ENCODE measurements at regions of chr19 and their contacts with region 1.

Region 1: GRCh38 chr19:50724522-50725217 is 1.5 kb downstream of the CLEC11A start:
- DNase-seq: peak; percentile 99
- H3K4me3 ChIP-seq: peak overlapping the region; percentile 68 to 82 (median 74)
- H3K27ac ChIP-seq: peak overlapping the region; percentile 20; the same call in 1 of the 2 replicates
- H3K4me1 ChIP-seq: peaks cover 3 to 39% (median 26%) of the 10 kb centered on the region in 4 experiments
- H3K27me3 ChIP-seq: peaks cover 4 to 39% (median 26%) of the 10 kb centered on the region in 4 experiments
- CTCF ChIP-seq: peak; percentile 63 to 80 (median 75)
- EP300 ChIP-seq: no peak
- POLR2A ChIP-seq: peak in 1 of 2 experiments; percentile 93; a peak in 2 of 3 replicates
- RAD21 ChIP-seq: peak; percentile 47 to 61

Region 2: GRCh38 chr19:50568321-50569075 is 156.2 kb before region 1 on chr19 and contains the start of gene LRRC4B:
- CTCF ChIA-PET with region 1: no interaction called
- POLR2A ChIA-PET with region 1: no interaction called
- DNase-seq: peak in 1 of 2 experiments; percentile 77
- H3K4me3 ChIP-seq: peak within 1 kb of the TSS; percentile 20 to 57 (median 34); a peak in 6 of 8 replicates
- H3K27ac ChIP-seq: no peak within 1 kb of the TSS
- H3K4me1 ChIP-seq: peaks cover 0 to 30% (median 18%) of the 10 kb centered on the region in 4 experiments; a peak in 6 of 7 replicates
- H3K27me3 ChIP-seq: peaks cover 5 to 45% (median 35%) of the 10 kb centered on the region in 4 experiments
- CTCF ChIP-seq: no peak
- EP300 ChIP-seq: no peak
- POLR2A ChIP-seq: no peak
- RAD21 ChIP-seq: no peak
- total RNA-seq, gene LRRC4B: 11.5 and 13.4 TPM in 2 replicates

Region 3: GRCh38 chr19:50712833-50713232 is 11.8 kb before region 1 on chr19:
- CTCF ChIA-PET with region 1: interaction called, 23 read pairs
- POLR2A ChIA-PET with region 1: interaction called, 8 read pairs
- DNase-seq: no peak
- H3K4me3 ChIP-seq: no peak overlapping the region
- H3K27ac ChIP-seq: no peak overlapping the region
- H3K4me1 ChIP-seq: peaks cover 2 to 12% (median 5%) of the 10 kb centered on the region in 4 experiments; a peak in 6 of 7 replicates
- H3K27me3 ChIP-seq: peaks cover 0 to 7% (median 4%) of the 10 kb centered on the region in 4 experiments; a peak in 4 of 7 replicates
- CTCF ChIP-seq: no peak
- EP300 ChIP-seq: no peak
- POLR2A ChIP-seq: no peak
- RAD21 ChIP-seq: no peak

Region 4: GRCh38 chr19:50777754-50778303 is 53.2 kb after region 1 on chr19:
- CTCF ChIA-PET with region 1: interaction called, 134 read pairs
- POLR2A ChIA-PET with region 1: interaction called, 8 read pairs
- DNase-seq: no peak
- H3K4me3 ChIP-seq: peak overlapping the region in 1 of 4 experiments; percentile 47; a peak in 3 of 8 replicates
- H3K27ac ChIP-seq: no peak overlapping the region
- H3K4me1 ChIP-seq: peaks cover 2 to 7% (median 4%) of the 10 kb centered on the region in 4 experiments; a peak in 5 of 7 replicates
- H3K27me3 ChIP-seq: peaks cover 3 to 53% (median 35%) of the 10 kb centered on the region in 4 experiments
- CTCF ChIP-seq: no peak
- EP300 ChIP-seq: no peak
- POLR2A ChIP-seq: no peak
- RAD21 ChIP-seq: no peak

Measured in H1 (cell line).